Dendritic cell treated with granulocyte-macrophage colony-stimulating factor and Interleukin-4, amounts not matched to agents 40 ng/mL and 50 ng/mL, for 4 days (primary cell): ENCODE measurements at regions of chr12 and their contacts with region 1.

Region 1: GRCh38 chr12:64549108-64549507 is 61.2 kb upstream of the RASSF3 start:
- H3K4me3 Mint-ChIP-seq: no peak overlapping the region
- H3K27ac Mint-ChIP-seq: no peak overlapping the region
- H3K4me1 Mint-ChIP-seq: no peaks in the 10 kb centered on the region
- H3K27me3 Mint-ChIP-seq: peaks cover 11% of the 10 kb centered on the region

Region 2: DNA sequence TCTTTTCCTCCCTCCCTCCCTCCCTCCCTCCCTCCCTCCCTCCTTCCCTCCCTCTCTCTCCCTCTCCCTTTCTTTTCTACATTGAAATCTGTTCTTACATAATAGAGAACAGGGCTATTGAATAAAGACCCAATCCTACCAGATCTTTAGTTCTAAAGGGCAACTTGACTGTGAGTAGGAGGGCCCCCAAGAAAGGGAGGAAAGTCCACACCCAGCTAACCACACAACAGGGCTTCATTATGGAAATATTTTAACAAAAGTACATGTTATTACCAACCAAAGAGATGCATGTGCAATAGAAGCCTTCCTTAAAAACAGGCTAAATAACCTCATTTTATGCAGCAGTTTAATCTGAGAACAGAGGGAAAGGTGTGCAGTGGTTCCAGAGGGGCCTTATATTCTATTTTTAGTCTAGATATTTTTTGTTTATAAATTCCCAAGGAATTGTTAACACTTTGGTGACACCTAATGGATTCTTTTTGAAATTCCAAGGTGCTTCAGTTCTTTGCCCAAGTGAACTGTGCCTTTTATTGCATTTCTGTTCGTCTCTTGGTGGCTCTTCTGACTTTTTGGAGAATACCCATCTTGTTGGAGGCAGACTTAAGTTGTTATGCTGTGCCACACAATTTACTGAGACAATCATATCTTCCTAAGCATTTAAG is 147.1 kb after region 1 on chr12:
- intact Hi-C with region 1: loop called (anchors 1 kb)
- H3K4me3 Mint-ChIP-seq: no peak overlapping the region
- H3K27ac Mint-ChIP-seq: no peak overlapping the region
- H3K4me1 Mint-ChIP-seq: peaks cover 38% of the 10 kb centered on the region
- H3K27me3 Mint-ChIP-seq: no peaks in the 10 kb centered on the region